ENCODE measurements at regions of chrX and their contacts with region 1.

Region 1: GRCh38 chrX:109187473-109188168 is 294.3 kb downstream of the GUCY2F start:
- DNase-seq: no peak
- ATAC-seq: no peak
- H3K4me3 ChIP-seq: no peak overlapping the region
- H3K27ac ChIP-seq: no peak overlapping the region
- H3K4me1 ChIP-seq: no peaks in the 10 kb centered on the region
- H3K27me3 ChIP-seq: no peaks in the 10 kb centered on the region
- CTCF ChIP-seq: no peak

Region 2: GRCh38 chrX:107629533-107629909 is 1558.1 kb before region 1 on chrX:
- CTCF ChIA-PET with region 1: no interaction called
- POLR2A ChIA-PET with region 1: no interaction called
- in situ Hi-C with region 1: no loop called
- intact Hi-C with region 1: no loop called
- DNase-seq: peak; percentile 13
- ATAC-seq: no peak
- H3K4me3 ChIP-seq: peak overlapping the region; percentile 90 to 97
- H3K27ac ChIP-seq: peak overlapping the region; percentile 93
- H3K4me1 ChIP-seq: peaks cover 33% of the 10 kb centered on the region
- H3K27me3 ChIP-seq: no peaks in the 10 kb centered on the region
- CTCF ChIP-seq: peak; percentile 63

Region 3: DNA sequence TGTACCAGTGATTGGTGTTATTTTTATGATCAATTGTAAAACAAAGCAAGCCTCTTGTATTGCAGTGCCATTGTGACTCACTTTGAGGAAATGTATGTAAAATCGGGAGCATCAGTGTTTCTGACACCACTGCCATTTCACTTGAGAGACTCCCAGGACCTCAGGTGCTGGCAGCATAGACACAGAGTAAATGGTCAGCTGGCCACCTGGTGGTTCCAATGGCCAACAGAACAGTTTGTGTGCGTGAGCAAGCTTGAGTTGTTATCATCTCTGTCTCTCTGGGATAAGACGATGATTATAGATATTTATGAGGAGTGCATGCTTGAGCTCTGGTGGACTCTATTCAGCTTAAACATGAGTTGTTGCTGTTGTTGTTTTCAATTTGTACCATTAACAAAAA is 62.3 kb before region 1 on chrX:
- CTCF ChIA-PET with region 1: no interaction called
- POLR2A ChIA-PET with region 1: no interaction called
- in situ Hi-C with region 1: no loop called
- intact Hi-C with region 1: loop called (anchors 10 kb)
- DNase-seq: no peak
- ATAC-seq: no peak
- H3K4me3 ChIP-seq: no peak overlapping the region
- H3K27ac ChIP-seq: no peak overlapping the region
- H3K4me1 ChIP-seq: no peaks in the 10 kb centered on the region
- H3K27me3 ChIP-seq: no peaks in the 10 kb centered on the region
- CTCF ChIP-seq: no peak

Region 4: GRCh38 chrX:109294097-109294814 is 106.6 kb after region 1 on chrX:
- CTCF ChIA-PET with region 1: no interaction called
- POLR2A ChIA-PET with region 1: no interaction called
- in situ Hi-C with region 1: no loop called
- intact Hi-C with region 1: no loop called
- DNase-seq: no peak
- ATAC-seq: no peak
- H3K4me3 ChIP-seq: no peak overlapping the region
- H3K27ac ChIP-seq: no peak overlapping the region
- H3K4me1 ChIP-seq: no peaks in the 10 kb centered on the region
- H3K27me3 ChIP-seq: no peaks in the 10 kb centered on the region
- CTCF ChIP-seq: no peak

Measured in Panc1 (cell line).